ENCODE measurements at regions of chr4 and their contacts with region 1.

Region 1: DNA sequence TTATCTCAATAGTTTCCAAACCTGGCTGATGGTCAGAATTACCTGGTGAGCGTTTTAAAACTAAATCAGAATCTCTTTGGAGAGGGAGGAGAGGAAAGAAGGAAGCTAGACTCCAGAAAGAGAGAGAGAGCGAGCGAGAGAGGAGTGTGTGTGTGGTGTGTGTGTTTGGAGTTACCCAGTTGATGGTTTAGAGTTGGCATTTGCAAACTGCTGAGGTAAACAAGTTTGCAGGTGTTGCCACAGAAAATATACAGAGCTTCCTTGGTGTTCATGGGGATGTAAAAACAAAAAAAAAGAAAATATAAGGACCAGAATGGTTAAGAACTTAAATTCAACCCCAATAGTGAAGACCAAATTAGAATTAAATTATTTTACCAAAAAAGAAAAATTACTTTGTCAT is 26.4 kb upstream of the LAP3 start:
- DNase-seq: no peak
- ATAC-seq: no peak
- H3K4me3 Mint-ChIP-seq: no peak overlapping the region
- H3K27ac Mint-ChIP-seq: no peak overlapping the region
- H3K4me1 Mint-ChIP-seq: peaks cover 14% of the 10 kb centered on the region
- H3K27me3 Mint-ChIP-seq: peaks cover 19% of the 10 kb centered on the region

Region 2: GRCh38 chr4:17636696-17637622 is 86.4 kb after region 1 on chr4:
- CTCF ChIA-PET with region 1: interaction called, 30 read pairs
- POLR2A ChIA-PET with region 1: no interaction called
- DNase-seq: peak; percentile 81
- ATAC-seq: peak; percentile 90
- H3K4me3 Mint-ChIP-seq: no peak overlapping the region
- H3K27ac Mint-ChIP-seq: no peak overlapping the region
- H3K4me1 Mint-ChIP-seq: no peaks in the 10 kb centered on the region
- H3K27me3 Mint-ChIP-seq: no peaks in the 10 kb centered on the region

Region 3: GRCh38 chr4:17680559-17681280 is 130.2 kb after region 1 on chr4:
- CTCF ChIA-PET with region 1: no interaction called
- POLR2A ChIA-PET with region 1: no interaction called
- DNase-seq: no peak
- ATAC-seq: no peak
- H3K4me3 Mint-ChIP-seq: no peak overlapping the region
- H3K27ac Mint-ChIP-seq: no peak overlapping the region
- H3K4me1 Mint-ChIP-seq: no peaks in the 10 kb centered on the region
- H3K27me3 Mint-ChIP-seq: peaks cover 8% of the 10 kb centered on the region